Body of pancreas (tissue), 4 donors: ENCODE measurements at regions of chr10 and their contacts with region 1.

Region 1: DNA sequence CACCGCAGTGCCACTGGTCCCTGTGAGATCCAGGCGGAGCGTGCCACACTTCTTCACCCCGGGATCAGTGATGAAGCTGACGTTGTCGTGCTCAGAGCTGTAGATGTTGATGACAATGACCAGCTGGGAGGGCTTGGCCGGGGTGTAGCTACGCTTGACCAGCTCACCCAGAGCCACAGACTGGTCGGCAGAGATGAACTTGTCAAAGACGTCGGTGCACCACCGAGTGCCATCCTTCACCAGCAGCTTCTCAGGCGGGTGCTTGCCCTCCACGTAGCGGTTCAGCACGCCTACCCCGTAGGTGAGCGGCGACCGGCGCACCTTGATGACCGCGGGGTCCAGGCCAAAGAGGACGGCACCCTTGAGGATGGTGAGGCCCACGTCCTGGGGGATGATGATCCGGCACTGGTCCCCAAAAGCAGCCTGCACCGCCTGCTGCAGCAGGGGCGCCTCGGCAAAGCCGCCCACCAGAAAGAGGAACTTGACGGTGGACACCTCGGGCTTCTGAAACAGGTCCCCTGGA is 54.2 kb downstream of the PNLIPRP2 start:
- DNase-seq: no peak
- ATAC-seq: no peak
- H3K4me3 ChIP-seq: no peak overlapping the region
- H3K27ac ChIP-seq: no peak overlapping the region
- H3K4me1 ChIP-seq: no peaks in the 10 kb centered on the region
- H3K27me3 ChIP-seq: no peaks in the 10 kb centered on the region
- CTCF ChIP-seq: no peak
- POLR2A ChIP-seq: no peak

Region 2: DNA sequence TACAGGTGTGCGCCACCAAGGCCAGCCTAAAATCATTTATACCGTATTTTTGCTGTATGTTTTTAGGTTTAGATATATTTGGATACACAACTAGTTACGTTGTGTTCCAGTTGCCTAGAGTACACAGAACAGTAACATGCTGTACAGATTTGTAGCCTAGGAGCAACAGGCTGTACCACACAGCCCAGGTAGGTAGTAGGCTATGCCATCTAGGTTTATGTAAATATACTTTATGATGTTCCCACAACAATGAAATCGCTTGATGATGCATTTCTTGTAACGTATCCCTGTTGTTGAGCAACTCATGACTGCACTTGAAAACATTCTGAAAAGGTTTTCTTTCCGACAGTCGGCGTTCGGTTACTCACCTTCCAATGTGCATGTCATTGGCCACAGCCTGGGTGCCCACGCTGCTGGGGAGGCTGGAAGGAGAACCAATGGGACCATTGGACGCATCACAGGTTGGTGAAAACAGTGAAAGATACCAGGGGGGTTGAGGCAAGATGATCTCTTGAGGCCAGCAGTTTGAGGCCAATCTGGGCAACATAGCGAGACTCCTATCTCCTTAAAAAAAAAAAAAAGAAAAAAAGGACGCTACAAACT is 121.5 kb before region 1 on chr10:
- intact Hi-C with region 1: no loop called
- DNase-seq: peak; percentile 74 to 91 (median 86)
- ATAC-seq: peak; percentile 75
- H3K4me3 ChIP-seq: no peak overlapping the region
- H3K27ac ChIP-seq: peak overlapping the region; percentile 88 to 95 (median 91)
- H3K4me1 ChIP-seq: peaks cover 44% of the 10 kb centered on the region
- H3K27me3 ChIP-seq: no peaks in the 10 kb centered on the region
- CTCF ChIP-seq: no peak
- POLR2A ChIP-seq: peak; percentile 74 to 88 (median 86)

Region 3: DNA sequence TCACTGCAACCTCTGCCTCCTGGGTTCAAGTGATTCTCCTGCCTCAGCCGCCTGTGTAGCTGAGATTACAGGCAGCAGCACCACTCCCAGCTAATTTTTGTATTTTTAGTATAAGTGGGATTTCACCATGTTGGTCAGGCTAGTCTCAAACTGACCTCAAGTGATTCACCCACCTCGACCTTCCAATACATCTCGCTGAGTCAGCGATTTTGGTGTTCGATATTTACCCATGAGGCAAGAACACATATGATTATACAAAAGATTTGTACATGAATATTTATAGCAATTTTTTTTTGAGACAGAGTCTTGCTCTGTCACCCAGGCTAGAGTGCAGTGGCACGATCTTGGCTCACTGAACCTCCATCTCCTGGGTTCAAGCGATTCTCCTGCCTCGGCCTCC is 109.4 kb before region 1 on chr10:
- intact Hi-C with region 1: no loop called
- DNase-seq: peak in 3 of 4 donors; percentile 36 to 53 (median 52)
- ATAC-seq: peak; percentile 31
- H3K4me3 ChIP-seq: no peak overlapping the region
- H3K27ac ChIP-seq: peak overlapping the region; percentile 15 to 95 (median 71)
- H3K4me1 ChIP-seq: peaks cover 45% of the 10 kb centered on the region
- H3K27me3 ChIP-seq: no peaks in the 10 kb centered on the region
- CTCF ChIP-seq: no peak
- POLR2A ChIP-seq: peak in 2 of 3 donors; percentile 50 to 52

Region 4: GRCh38 chr10:116787893-116788665 is 113.1 kb after region 1 on chr10:
- intact Hi-C with region 1: loop called (anchors 2 kb)
- DNase-seq: peak; percentile 73 to 83 (median 76)
- ATAC-seq: peak; percentile 69
- H3K4me3 ChIP-seq: no peak overlapping the region
- H3K27ac ChIP-seq: no peak overlapping the region
- H3K4me1 ChIP-seq: peaks cover 4% of the 10 kb centered on the region
- H3K27me3 ChIP-seq: no peaks in the 10 kb centered on the region
- CTCF ChIP-seq: peak; percentile 90 to 99 (median 94)
- POLR2A ChIP-seq: no peak

Region 5: DNA sequence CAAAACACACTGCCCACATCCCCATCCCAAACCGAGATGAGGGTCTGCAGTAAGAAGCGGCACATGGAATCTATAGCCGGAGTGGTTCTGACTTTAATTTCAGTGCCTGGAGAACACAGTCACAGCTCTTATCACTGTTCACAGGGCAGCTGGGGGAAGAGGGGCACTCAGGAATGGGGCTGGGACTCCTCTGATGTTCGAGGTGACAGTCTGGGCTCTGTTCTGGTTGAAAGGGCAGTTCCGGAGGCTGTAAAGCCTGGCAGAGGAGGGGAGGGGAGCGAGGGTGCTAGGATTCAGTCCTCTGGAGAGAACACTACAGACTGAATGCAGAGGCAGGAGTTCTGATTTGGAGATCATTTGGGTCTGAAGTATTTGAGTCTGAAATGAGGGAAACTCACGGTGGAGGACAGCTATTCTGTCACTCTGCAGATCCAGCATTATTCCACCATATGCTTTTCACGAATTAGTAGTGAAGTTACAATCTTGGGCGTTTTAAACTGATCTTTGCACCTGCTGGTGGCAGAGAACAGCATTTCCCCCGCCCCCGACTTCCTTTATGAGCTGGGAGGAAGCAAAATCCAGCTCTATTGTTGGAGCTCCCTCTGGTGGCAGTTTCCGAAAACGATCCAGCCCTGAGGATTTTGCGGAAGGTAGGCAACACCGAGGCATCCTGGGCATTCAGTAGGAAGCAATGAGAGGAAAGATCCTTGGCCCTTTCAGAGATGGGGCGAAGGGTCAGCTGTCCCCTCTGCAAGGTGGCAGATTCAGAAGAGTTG is 499.7 kb after region 1 on chr10:
- intact Hi-C with region 1: loop called (anchors 5 kb)
- DNase-seq: peak; percentile 84 to 90 (median 88)
- ATAC-seq: peak; percentile 91
- H3K4me3 ChIP-seq: peak overlapping the region in 1 of 2 donors; percentile 23
- H3K27ac ChIP-seq: no peak overlapping the region
- H3K4me1 ChIP-seq: peaks cover 17% of the 10 kb centered on the region
- H3K27me3 ChIP-seq: peaks cover 0 to 1% of the 10 kb centered on the region in 2 donors
- CTCF ChIP-seq: peak; percentile 83 to 93 (median 91)
- POLR2A ChIP-seq: peak in 1 of 3 donors; percentile 29